Activated T-helper 1 cell treated with anti-CD3 and anti-CD28 coated beads, Interleukin-12 subunit alpha, Interleukin-12 subunit beta, Interleukin-2, Interleukin-4 antibody, amounts not matched to agents 30 ng/mL and 10 ng/mL and 1 ng/mL, durations not matched to agents 14 hours and 24 hours and 36 hours (primary cell): ENCODE measurements at regions of chr12 and their contacts with region 1.

Region 1: DNA sequence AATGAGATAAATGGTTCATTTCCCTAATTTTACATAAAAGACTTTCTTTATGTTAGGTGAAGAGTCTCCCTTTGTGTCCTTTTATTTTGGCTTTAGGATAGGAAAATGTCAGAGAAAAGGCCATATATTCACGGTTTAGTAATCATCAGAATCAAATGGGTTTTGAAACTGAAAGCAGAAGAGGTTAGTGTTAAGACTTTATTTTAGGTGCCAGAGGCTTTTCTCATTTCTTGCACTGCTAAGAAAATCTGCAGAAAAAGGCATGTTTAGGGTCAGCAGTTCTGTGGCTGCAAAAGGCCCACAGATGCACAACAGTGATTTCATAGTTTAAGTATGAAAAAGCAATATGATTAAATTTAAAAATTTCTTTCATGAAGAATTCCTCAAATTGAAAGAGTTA is 80.4 kb upstream of the SINHCAF start:
- DNase-seq: no peak
- H3K4me3 Mint-ChIP-seq: no peak overlapping the region
- H3K27ac Mint-ChIP-seq: no peak overlapping the region
- H3K4me1 Mint-ChIP-seq: no peaks in the 10 kb centered on the region
- H3K27me3 Mint-ChIP-seq: peaks cover 3% of the 10 kb centered on the region

Region 2: GRCh38 chr12:31234955-31235867 is 171.1 kb before region 1 on chr12:
- intact Hi-C with region 1: no loop called
- DNase-seq: no peak
- H3K4me3 Mint-ChIP-seq: no peak overlapping the region
- H3K27ac Mint-ChIP-seq: no peak overlapping the region
- H3K4me1 Mint-ChIP-seq: peaks cover 11% of the 10 kb centered on the region
- H3K27me3 Mint-ChIP-seq: peaks cover 12% of the 10 kb centered on the region

Region 3: DNA sequence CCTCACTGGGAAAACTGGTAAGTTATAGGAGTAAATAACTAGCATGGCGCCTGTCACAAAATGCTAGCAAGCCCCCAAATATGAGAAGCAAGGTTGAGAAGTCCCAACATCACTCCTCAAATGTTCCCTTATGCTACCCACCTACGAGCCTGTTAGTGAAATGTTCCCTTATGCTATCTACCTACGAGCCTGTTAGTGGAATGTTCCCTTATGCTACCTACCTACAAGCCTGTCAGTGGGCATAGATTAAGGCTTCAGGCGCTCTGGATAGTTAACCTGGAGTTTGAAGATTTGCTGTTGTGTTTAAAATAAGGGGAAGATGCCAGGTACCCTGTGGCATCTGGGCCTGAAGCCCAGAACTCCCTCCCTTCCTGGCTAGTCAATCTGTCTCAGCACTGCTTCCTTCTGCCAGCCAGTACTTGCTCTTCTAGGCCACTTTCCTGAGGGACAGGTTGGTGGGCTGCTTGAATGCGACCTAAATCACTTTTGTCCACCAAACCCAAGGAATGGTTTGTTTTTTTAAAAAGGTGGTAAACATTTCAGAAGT is 13.3 kb before region 1 on chr12:
- intact Hi-C with region 1: no loop called
- DNase-seq: no peak
- H3K4me3 Mint-ChIP-seq: no peak overlapping the region
- H3K27ac Mint-ChIP-seq: no peak overlapping the region
- H3K4me1 Mint-ChIP-seq: no peaks in the 10 kb centered on the region
- H3K27me3 Mint-ChIP-seq: no peaks in the 10 kb centered on the region

Region 4: DNA sequence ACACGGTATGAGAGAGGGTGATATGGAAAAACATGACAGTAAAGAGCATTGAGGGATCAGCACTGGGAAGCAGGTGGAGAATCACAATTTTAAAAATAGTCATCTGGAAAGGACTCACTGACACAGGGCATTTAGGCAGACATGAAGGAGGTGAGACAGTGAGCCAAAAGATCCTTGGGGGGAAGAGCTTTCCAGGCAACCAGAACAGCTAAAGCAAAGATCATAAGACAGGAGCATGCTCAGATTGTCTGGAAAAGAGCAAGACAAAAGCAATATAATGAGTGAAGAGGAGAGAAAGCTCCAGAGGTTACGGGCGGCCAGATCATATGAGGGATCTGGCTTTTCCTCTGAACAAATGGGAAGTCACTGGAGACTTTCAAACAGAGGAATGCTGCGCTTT is 120.7 kb after region 1 on chr12:
- intact Hi-C with region 1: no loop called
- DNase-seq: no peak
- H3K4me3 Mint-ChIP-seq: no peak overlapping the region
- H3K27ac Mint-ChIP-seq: no peak overlapping the region
- H3K4me1 Mint-ChIP-seq: no peaks in the 10 kb centered on the region
- H3K27me3 Mint-ChIP-seq: peaks cover 1% of the 10 kb centered on the region

Region 5: GRCh38 chr12:31589904-31590641 is 183.7 kb after region 1 on chr12:
- intact Hi-C with region 1: loop called (anchors 2 kb)
- DNase-seq: no peak
- H3K4me3 Mint-ChIP-seq: peak overlapping the region; percentile 73
- H3K27ac Mint-ChIP-seq: peak overlapping the region; percentile 29
- H3K4me1 Mint-ChIP-seq: peaks cover 13% of the 10 kb centered on the region
- H3K27me3 Mint-ChIP-seq: peaks cover 54% of the 10 kb centered on the region

Region 6: GRCh38 chr12:31605531-31605930 is 199.2 kb after region 1 on chr12:
- intact Hi-C with region 1: no loop called
- DNase-seq: no peak
- H3K4me3 Mint-ChIP-seq: no peak overlapping the region
- H3K27ac Mint-ChIP-seq: no peak overlapping the region
- H3K4me1 Mint-ChIP-seq: no peaks in the 10 kb centered on the region
- H3K27me3 Mint-ChIP-seq: peaks cover 5% of the 10 kb centered on the region

Region 7: DNA sequence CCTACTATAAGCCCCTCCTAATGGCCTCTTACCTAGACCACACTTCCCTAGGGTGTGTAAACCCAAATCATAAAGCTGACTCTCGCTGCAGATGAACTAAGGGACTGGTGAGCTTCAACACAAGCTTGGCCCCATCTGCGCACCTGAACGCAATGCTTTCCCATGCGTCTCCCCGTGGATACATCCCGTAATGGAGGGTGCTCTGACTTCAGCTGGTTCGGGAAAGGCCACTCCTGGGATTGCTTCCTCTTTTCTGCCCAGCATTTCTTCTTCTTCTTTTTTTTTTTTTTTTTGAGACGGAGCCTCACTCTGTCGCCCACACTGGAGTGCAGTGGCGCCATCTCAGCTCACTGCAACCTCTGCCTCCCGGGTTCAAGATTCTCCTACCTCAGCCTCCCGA is 225.4 kb after region 1 on chr12:
- intact Hi-C with region 1: loop called (anchors 1 kb)
- DNase-seq: no peak
- H3K4me3 Mint-ChIP-seq: no peak overlapping the region
- H3K27ac Mint-ChIP-seq: no peak overlapping the region
- H3K4me1 Mint-ChIP-seq: no peaks in the 10 kb centered on the region
- H3K27me3 Mint-ChIP-seq: peaks cover 4% of the 10 kb centered on the region

Region 8: GRCh38 chr12:32302218-32303173 is 896.2 kb after region 1 on chr12:
- intact Hi-C with region 1: loop called (anchors 10 kb)
- DNase-seq: no peak
- H3K4me3 Mint-ChIP-seq: no peak overlapping the region
- H3K27ac Mint-ChIP-seq: no peak overlapping the region
- H3K4me1 Mint-ChIP-seq: no peaks in the 10 kb centered on the region
- H3K27me3 Mint-ChIP-seq: no peaks in the 10 kb centered on the region